ENCODE measurements at regions of chr1 and their contacts with region 1.

Region 1: DNA sequence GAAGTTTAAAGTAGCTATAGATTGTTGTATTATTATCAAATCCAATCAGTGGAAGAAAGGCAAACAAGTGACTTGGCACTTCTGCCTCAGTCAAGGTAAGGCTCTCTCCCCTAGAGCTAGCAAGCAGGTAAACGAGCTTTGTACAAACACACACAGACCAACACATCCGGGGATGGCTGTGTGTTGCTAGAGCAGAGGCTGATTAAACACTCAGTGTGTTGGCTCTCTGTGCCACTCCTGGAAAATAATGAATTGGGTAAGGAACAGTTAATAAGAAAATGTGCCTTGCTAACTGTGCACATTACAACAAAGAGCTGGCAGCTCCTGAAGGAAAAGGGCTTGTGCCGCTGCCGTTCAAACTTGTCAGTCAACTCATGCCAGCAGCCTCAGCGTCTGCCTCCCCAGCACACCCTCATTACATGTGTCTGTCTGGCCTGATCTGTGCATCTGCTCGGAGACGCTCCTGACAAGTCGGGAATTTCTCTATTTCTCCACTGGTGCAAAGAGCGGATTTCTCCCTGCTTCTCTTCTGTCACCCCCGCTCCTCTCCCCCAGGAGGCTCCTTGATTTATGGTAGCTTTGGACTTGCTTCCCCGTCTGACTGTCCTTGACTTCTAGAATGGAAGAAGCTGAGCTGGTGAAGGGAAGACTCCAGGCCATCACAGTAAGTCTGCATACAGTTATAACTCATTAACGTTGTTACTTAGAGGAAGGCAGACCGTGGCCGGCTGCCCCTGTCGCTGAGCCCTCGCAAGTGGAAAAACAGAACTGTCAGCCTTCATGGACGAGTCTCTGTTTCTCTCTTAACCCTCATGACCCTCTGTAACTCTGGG is at the start of gene PALMD:
- DNase-seq: peak; percentile 61
- ATAC-seq: peak; percentile 89
- H3K4me3 ChIP-seq: peak within 1 kb of the TSS; percentile 74 to 86 (median 80)
- H3K27ac ChIP-seq: peak within 1 kb of the TSS; percentile 87
- H3K4me1 ChIP-seq: peaks cover 56% of the 10 kb centered on the region
- H3K27me3 ChIP-seq: no peaks in the 10 kb centered on the region; a peak in 1 of 5 replicates
- CTCF ChIP-seq: no peak
- EP300 ChIP-seq: no peak
- POLR2A ChIP-seq: peak; percentile 53 to 56; a peak in 2 of 4 replicates
- RAD21 ChIP-seq: no peak
- total RNA-seq, gene PALMD: 31.1 and 42.0 TPM in 2 replicates

Region 2: GRCh38 chr1:98826891-98827440 is 818.9 kb before region 1 on chr1:
- CTCF ChIA-PET with region 1: no interaction called
- POLR2A ChIA-PET with region 1: no interaction called
- in situ Hi-C with region 1: no loop called
- intact Hi-C with region 1: no loop called
- DNase-seq: no peak
- ATAC-seq: no peak
- H3K4me3 ChIP-seq: no peak overlapping the region
- H3K27ac ChIP-seq: no peak overlapping the region
- H3K4me1 ChIP-seq: no peaks in the 10 kb centered on the region
- H3K27me3 ChIP-seq: no peaks in the 10 kb centered on the region
- CTCF ChIP-seq: no peak
- EP300 ChIP-seq: no peak
- POLR2A ChIP-seq: no peak
- RAD21 ChIP-seq: no peak

Region 3: GRCh38 chr1:99084562-99084961 is 561.4 kb before region 1 on chr1:
- CTCF ChIA-PET with region 1: no interaction called
- POLR2A ChIA-PET with region 1: no interaction called
- in situ Hi-C with region 1: no loop called
- intact Hi-C with region 1: no loop called
- DNase-seq: no peak
- ATAC-seq: no peak
- H3K4me3 ChIP-seq: no peak overlapping the region
- H3K27ac ChIP-seq: no peak overlapping the region
- H3K4me1 ChIP-seq: no peaks in the 10 kb centered on the region
- H3K27me3 ChIP-seq: no peaks in the 10 kb centered on the region
- CTCF ChIP-seq: no peak
- EP300 ChIP-seq: no peak
- POLR2A ChIP-seq: no peak
- RAD21 ChIP-seq: no peak

Region 4: DNA sequence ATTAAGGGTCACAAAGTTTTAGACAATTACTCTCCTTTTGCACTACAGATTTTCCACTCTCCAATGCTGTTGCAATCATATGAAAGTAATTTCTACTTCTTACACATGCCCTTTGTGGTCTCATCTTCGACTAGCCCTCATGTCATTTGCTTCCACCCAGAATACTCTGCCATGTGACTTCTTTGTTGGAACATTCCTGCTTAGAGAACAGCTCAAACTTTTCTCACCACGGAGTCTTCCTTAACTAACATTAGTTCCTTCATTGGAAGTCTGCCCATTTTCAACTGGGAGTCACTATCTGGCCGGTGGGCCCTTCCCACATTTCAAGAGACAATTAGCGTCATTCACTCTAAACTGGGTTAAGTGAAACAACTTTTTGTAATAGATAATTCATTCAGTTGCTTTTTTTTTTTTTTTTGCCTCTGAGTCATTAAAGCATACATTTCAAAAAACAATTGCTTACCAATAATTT is 142.6 kb before region 1 on chr1:
- CTCF ChIA-PET with region 1: no interaction called
- POLR2A ChIA-PET with region 1: no interaction called
- in situ Hi-C with region 1: no loop called
- intact Hi-C with region 1: loop called (anchors 5 kb)
- DNase-seq: no peak
- ATAC-seq: no peak
- H3K4me3 ChIP-seq: no peak overlapping the region
- H3K27ac ChIP-seq: no peak overlapping the region
- H3K4me1 ChIP-seq: peaks cover 50% of the 10 kb centered on the region
- H3K27me3 ChIP-seq: no peaks in the 10 kb centered on the region; a peak in 1 of 5 replicates
- CTCF ChIP-seq: no peak
- EP300 ChIP-seq: no peak
- POLR2A ChIP-seq: no peak
- RAD21 ChIP-seq: no peak

Region 5: DNA sequence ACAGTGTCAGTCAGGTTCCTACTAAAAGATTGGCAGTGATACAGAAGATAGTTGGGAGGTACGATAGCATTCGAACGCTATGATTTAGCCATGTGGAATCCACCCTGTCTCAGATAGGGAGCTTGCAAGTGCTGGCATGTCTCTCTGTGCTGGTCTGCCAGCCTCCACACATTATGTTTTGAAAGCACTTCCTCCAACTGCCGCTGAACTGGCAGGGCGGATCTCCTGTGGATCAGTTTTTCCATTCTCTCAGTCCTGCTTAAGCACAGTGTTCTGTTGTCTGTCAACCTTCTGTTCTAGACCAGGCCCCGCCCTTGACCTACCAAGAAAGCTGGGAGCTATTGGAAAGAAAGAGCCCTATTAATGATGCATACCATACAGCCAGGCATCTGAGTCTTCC is 65.5 kb before region 1 on chr1:
- CTCF ChIA-PET with region 1: no interaction called
- POLR2A ChIA-PET with region 1: interaction called, 11 read pairs
- in situ Hi-C with region 1: no loop called
- intact Hi-C with region 1: no loop called
- DNase-seq: no peak
- ATAC-seq: no peak
- H3K4me3 ChIP-seq: no peak overlapping the region
- H3K27ac ChIP-seq: peak overlapping the region; percentile 46
- H3K4me1 ChIP-seq: peaks cover 51% of the 10 kb centered on the region
- H3K27me3 ChIP-seq: no peaks in the 10 kb centered on the region
- CTCF ChIP-seq: no peak
- EP300 ChIP-seq: no peak
- POLR2A ChIP-seq: no peak
- RAD21 ChIP-seq: no peak

Region 6: GRCh38 chr1:99599678-99600175 is 46.2 kb before region 1 on chr1:
- CTCF ChIA-PET with region 1: no interaction called
- POLR2A ChIA-PET with region 1: interaction called, 19 read pairs
- in situ Hi-C with region 1: no loop called
- intact Hi-C with region 1: loop called (anchors 5 kb)
- DNase-seq: peak; percentile 86
- ATAC-seq: peak; percentile 80
- H3K4me3 ChIP-seq: no peak overlapping the region
- H3K27ac ChIP-seq: peak overlapping the region; percentile 53
- H3K4me1 ChIP-seq: peaks cover 60% of the 10 kb centered on the region
- H3K27me3 ChIP-seq: no peaks in the 10 kb centered on the region
- CTCF ChIP-seq: no peak
- EP300 ChIP-seq: peak in 1 of 2 experiments; percentile 79; a peak in 1 of 4 replicates
- POLR2A ChIP-seq: no peak
- RAD21 ChIP-seq: no peak

Region 7: GRCh38 chr1:99776120-99776519 is 130.2 kb after region 1 on chr1:
- CTCF ChIA-PET with region 1: no interaction called
- POLR2A ChIA-PET with region 1: no interaction called
- in situ Hi-C with region 1: no loop called
- intact Hi-C with region 1: no loop called
- DNase-seq: no peak
- ATAC-seq: no peak
- H3K4me3 ChIP-seq: no peak overlapping the region
- H3K27ac ChIP-seq: no peak overlapping the region
- H3K4me1 ChIP-seq: no peaks in the 10 kb centered on the region; the same call in 1 of the 2 replicates
- H3K27me3 ChIP-seq: no peaks in the 10 kb centered on the region
- CTCF ChIP-seq: no peak
- EP300 ChIP-seq: no peak
- POLR2A ChIP-seq: no peak
- RAD21 ChIP-seq: no peak

Measured in HepG2 (cell line).